CD4-positive, alpha-beta T cell (primary cell): ENCODE measurements at regions of chr3 and their contacts with region 1.

Region 1: DNA sequence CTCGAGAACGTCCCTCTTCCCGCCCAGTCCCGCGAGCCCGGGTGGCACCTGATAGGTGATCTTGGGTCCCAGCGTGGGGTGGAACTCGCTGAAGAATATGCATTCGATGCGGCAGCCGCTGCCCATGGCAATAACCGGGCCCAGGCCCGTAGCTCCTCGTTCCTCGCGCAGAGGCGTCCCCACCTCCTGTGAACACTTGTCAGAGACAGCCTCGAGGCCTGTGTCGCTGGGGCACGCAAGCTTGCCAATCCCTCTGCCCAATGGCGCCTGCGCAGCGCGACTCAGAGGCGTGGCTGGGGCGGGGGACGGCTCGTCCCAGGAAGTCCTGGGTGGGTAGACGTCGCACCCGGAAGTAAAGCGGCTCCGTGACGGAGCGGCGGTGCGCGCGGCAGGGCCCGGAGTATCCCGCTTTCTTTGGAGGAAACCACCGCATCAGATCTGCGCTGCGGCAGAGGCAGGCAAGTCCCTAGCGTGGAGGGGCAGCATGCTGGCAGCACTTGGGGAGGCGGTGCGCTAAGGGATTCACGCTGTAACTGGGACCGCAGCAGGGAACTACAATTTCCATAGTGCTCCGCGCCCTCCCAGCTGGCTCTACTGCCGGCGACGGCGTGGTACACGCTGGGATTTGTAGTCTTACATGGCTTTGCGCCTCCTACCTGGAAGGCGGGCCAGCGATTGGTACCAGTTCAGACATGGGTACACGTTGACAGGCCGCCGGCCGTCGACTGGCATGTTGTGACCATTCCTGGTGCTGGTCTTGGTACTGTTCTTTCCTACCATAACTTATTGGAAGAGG is at the starts of genes CYB561D2 and NPRL2:
- DNase-seq: peak; percentile 98 to 100 (median 99)
- ATAC-seq: peak; percentile 85
- H3K4me3 ChIP-seq: peak within 1 kb of the TSS; percentile 76
- H3K4me3 Mint-ChIP-seq: peak within 1 kb of the TSS; percentile 97
- H3K27ac ChIP-seq: peak within 1 kb of the TSS; percentile 94 to 97
- H3K27ac Mint-ChIP-seq: peak within 1 kb of the TSS; percentile 99
- H3K4me1 ChIP-seq: peaks cover 73% of the 10 kb centered on the region
- H3K4me1 Mint-ChIP-seq: peaks cover 64% of the 10 kb centered on the region
- H3K27me3 ChIP-seq: no peaks in the 10 kb centered on the region
- H3K27me3 Mint-ChIP-seq: no peaks in the 10 kb centered on the region
- CTCF ChIP-seq: no peak
- total RNA-seq, gene CYB561D2: 19.8 TPM
- total RNA-seq, gene NPRL2: 29.4 to 33.2 TPM

Region 2: DNA sequence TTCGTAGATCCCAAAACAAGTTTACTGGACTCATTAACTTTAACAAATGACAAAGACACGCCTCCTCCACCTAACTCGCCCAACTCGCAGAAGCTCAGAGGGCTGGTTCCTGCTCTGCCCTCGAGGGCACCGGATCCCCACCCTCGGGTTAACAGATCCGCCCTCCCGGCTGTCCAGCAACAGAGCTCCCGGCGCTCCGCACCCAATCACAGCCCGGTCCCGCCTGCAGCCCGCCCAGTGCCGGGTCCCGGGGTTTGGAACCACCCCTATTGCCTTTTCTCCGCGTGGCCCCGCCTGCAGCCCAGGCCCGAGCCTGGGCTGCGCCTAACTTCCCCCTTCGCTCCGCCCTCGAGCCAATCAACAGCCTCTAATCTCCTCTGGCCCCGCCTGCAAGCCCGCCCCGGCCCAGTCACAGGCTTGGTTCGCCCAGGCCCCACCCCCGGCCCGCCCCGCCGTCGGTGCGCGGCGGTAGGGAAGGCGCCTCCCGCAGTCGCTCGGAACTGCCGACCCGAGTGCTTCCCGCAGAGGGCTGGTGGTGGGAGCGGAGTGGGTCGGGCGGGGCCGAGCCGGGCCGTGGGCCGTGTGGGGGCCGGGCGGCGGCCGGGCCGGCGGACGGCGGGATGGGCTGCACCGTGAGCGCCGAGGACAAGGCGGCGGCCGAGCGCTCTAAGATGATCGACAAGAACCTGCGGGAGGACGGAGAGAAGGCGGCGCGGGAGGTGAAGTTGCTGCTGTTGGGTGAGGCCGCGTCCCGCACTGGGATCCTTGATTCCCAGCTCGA is 114.8 kb before region 1 on chr3 and contains the start of gene GNAI2:
- CTCF ChIA-PET with region 1: interaction called, 5 read pairs
- POLR2A ChIA-PET with region 1: interaction called, 10 read pairs
- intact Hi-C with region 1: no loop called
- DNase-seq: peak; percentile 97 to 100 (median 99)
- ATAC-seq: peak; percentile 85
- H3K4me3 ChIP-seq: peak within 1 kb of the TSS; percentile 99
- H3K4me3 Mint-ChIP-seq: peak within 1 kb of the TSS; percentile 94
- H3K27ac ChIP-seq: peak within 1 kb of the TSS; percentile 73 to 80
- H3K27ac Mint-ChIP-seq: peak within 1 kb of the TSS; percentile 92
- H3K4me1 ChIP-seq: peaks cover 47% of the 10 kb centered on the region
- H3K4me1 Mint-ChIP-seq: peaks cover 45% of the 10 kb centered on the region
- H3K27me3 ChIP-seq: no peaks in the 10 kb centered on the region
- H3K27me3 Mint-ChIP-seq: no peaks in the 10 kb centered on the region
- CTCF ChIP-seq: no peak
- total RNA-seq, gene GNAI2: 204 to 217 TPM

Region 3: DNA sequence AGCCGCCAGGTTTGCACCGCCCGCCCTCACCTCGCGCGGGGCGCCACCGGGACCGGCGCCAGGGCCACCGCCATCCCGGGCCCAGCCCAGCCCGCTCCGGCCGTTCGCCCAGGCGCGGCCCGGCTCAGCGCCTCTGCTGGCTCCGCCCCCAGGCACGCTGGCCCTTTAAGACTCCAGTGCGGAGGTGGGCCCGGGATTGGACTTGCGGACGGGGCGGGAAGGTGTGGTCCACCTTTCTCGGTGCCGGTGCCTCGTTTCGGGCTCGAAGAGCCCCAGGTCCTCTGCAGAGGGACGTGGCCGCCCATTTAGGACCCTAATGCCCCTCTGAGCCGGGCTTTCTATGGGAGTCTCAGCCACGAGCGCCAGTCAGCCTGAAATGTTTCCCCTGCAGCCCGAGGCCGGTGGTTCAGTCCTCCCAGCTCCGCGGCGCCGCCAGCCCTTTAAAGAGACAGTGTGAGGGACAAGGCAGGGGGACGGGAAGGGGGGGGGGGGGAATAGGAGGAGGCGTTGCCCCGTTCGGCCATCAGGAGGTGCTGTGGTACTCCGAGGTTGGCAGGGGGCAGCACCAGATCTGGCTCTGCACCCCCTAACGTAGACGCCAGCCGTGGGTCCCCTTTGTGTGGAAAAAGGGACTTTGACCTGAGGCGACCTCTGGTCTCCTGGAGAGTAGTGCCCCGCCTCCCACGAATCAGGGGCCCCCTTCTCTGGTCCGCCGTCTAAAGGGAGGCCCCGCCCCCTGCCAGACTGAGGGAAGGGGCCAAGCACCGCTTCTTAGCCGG is 29.2 kb before region 1 on chr3:
- CTCF ChIA-PET with region 1: interaction called, 8 read pairs
- POLR2A ChIA-PET with region 1: interaction called, 15 read pairs
- intact Hi-C with region 1: no loop called
- DNase-seq: peak; percentile 68 to 89 (median 76)
- ATAC-seq: peak; percentile 66
- H3K4me3 ChIP-seq: peak overlapping the region; percentile 68
- H3K4me3 Mint-ChIP-seq: peak overlapping the region; percentile 90
- H3K27ac ChIP-seq: peak overlapping the region; percentile 75 to 96
- H3K27ac Mint-ChIP-seq: peak overlapping the region; percentile 82
- H3K4me1 ChIP-seq: peaks cover 76% of the 10 kb centered on the region
- H3K4me1 Mint-ChIP-seq: peaks cover 42% of the 10 kb centered on the region
- H3K27me3 ChIP-seq: no peaks in the 10 kb centered on the region
- H3K27me3 Mint-ChIP-seq: no peaks in the 10 kb centered on the region
- CTCF ChIP-seq: peak; percentile 45

Region 4: GRCh38 chr3:50337191-50337841 is 13.4 kb before region 1 on chr3:
- CTCF ChIA-PET with region 1: interaction called, 18 read pairs
- POLR2A ChIA-PET with region 1: interaction called, 214 read pairs
- intact Hi-C with region 1: loop called in 1 of 2 experiments (anchors 2 kb)
- DNase-seq: peak; percentile 81 to 98 (median 90)
- ATAC-seq: peak; percentile 77
- H3K4me3 ChIP-seq: peak overlapping the region; percentile 93
- H3K4me3 Mint-ChIP-seq: peak overlapping the region; percentile 96
- H3K27ac ChIP-seq: peak overlapping the region; percentile 95 to 96
- H3K27ac Mint-ChIP-seq: peak overlapping the region; percentile 95
- H3K4me1 ChIP-seq: peaks cover 85% of the 10 kb centered on the region
- H3K4me1 Mint-ChIP-seq: peaks cover 71% of the 10 kb centered on the region
- H3K27me3 ChIP-seq: no peaks in the 10 kb centered on the region
- H3K27me3 Mint-ChIP-seq: no peaks in the 10 kb centered on the region
- CTCF ChIP-seq: no peak

Region 5: GRCh38 chr3:50542177-50543034 is 191.7 kb after region 1 on chr3:
- CTCF ChIA-PET with region 1: interaction called, 20 read pairs
- POLR2A ChIA-PET with region 1: interaction called, 6 read pairs
- intact Hi-C with region 1: loop called (anchors 1 kb)
- DNase-seq: peak; percentile 29 to 79 (median 50)
- ATAC-seq: peak; percentile 74
- H3K4me3 ChIP-seq: no peak overlapping the region
- H3K4me3 Mint-ChIP-seq: no peak overlapping the region
- H3K27ac ChIP-seq: no peak overlapping the region
- H3K27ac Mint-ChIP-seq: no peak overlapping the region
- H3K4me1 ChIP-seq: no peaks in the 10 kb centered on the region
- H3K4me1 Mint-ChIP-seq: no peaks in the 10 kb centered on the region
- H3K27me3 ChIP-seq: peaks cover 0 to 4% of the 10 kb centered on the region in 2 experiments
- H3K27me3 Mint-ChIP-seq: peaks cover 13% of the 10 kb centered on the region
- CTCF ChIP-seq: peak; percentile 90

Region 6: DNA sequence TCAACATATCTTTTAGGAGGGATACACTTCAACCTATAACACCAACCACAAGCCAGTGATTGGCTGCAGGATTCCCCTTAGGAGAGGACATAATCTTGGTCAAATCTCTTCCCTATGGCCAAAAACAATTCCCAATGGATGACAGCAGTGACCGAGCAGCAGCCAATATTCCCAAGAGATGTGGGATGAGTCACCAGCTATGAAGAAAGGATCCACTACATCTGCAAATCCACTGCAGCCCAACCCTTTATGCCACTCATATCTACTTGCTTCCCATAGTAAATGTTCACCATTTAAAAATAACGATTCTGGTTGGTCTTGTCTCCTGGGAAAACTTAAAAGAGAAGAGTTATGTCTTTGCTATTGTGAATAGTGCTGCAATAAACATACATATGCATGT is 1529.2 kb after region 1 on chr3:
- CTCF ChIA-PET with region 1: no interaction called
- POLR2A ChIA-PET with region 1: no interaction called
- intact Hi-C with region 1: no loop called
- DNase-seq: no peak
- ATAC-seq: no peak
- H3K4me3 ChIP-seq: no peak overlapping the region
- H3K4me3 Mint-ChIP-seq: no peak overlapping the region
- H3K27ac ChIP-seq: no peak overlapping the region
- H3K27ac Mint-ChIP-seq: no peak overlapping the region
- H3K4me1 ChIP-seq: no peaks in the 10 kb centered on the region
- H3K4me1 Mint-ChIP-seq: no peaks in the 10 kb centered on the region
- H3K27me3 ChIP-seq: peaks cover 0 to 2% of the 10 kb centered on the region in 2 experiments
- H3K27me3 Mint-ChIP-seq: peaks cover 24% of the 10 kb centered on the region
- CTCF ChIP-seq: no peak